CD8-positive, alpha-beta T cell (primary cell): ENCODE measurements at regions of chr2 and their contacts with region 1.

Region 1: DNA sequence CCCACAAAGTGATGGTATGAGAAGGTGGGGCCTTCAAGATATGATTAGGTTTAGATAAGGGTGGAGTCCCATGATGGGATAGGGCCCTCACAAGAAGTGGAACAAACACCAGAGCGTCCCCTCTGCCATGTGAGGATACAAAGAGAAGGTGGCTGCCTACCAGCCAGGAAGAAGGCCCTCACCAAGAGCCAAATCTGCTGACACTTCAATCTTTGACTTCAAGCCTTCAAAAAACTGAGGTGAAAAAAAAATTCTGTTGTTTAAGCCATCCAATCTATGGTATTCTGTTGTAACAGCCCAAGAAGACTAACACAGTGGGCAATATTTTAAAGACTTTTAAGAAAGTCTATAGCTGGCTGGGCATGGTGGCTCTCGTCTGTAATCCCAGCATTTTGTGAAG is 522.1 kb downstream of the NRXN1 start:
- DNase-seq: no peak
- ATAC-seq: no peak
- H3K4me3 ChIP-seq: no peak overlapping the region
- H3K4me3 Mint-ChIP-seq: no peak overlapping the region
- H3K27ac ChIP-seq: no peak overlapping the region
- H3K27ac Mint-ChIP-seq: no peak overlapping the region
- H3K4me1 ChIP-seq: no peaks in the 10 kb centered on the region
- H3K4me1 Mint-ChIP-seq: no peaks in the 10 kb centered on the region
- H3K27me3 ChIP-seq: no peaks in the 10 kb centered on the region
- H3K27me3 Mint-ChIP-seq: no peaks in the 10 kb centered on the region
- CTCF ChIP-seq: no peak

Region 2: DNA sequence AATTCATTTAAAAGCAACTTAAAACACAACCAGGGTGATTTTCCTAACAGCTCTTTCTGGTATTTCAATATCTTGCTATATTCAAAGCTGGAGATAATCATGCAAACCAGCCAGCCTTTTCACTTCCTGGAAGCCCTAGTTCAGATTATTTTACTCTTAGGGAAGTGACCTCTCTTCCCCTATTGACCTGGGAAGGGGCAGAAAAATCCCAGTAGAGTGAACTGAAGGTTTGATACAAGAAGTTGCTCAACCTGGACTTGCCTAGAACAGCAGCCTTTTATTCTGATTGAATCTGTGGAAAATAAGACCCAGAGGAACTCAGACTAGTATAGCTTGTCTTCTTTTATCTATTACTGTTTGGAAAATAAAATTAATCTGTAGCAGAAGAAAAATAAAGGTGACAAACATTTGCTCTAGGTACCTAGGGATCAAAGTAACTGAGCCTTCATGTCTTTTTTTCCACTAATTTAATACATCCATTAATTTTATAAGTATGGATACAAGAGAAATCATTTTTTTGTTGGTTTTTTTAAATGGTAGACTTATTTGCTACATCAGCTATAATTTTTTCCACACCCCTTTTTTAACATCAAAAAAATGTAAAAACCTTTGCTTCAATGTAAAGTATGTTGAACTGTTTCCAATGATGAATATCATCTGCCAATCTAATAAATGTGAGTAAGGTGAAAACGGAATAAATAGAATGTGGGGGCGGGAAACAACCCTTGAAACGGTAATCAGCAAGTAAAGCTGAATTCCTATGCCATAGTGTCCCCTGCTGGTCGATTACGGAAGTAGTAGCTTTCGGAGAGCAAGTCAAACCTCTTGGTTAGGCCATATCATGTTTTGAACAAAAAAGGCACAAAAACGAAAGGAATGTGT is 107.8 kb before region 1 on chr2:
- CTCF ChIA-PET with region 1: no interaction called
- POLR2A ChIA-PET with region 1: no interaction called
- intact Hi-C with region 1: no loop called
- DNase-seq: peak in 1 of 9 experiments; percentile 1
- ATAC-seq: no peak
- H3K4me3 ChIP-seq: no peak overlapping the region
- H3K4me3 Mint-ChIP-seq: no peak overlapping the region
- H3K27ac ChIP-seq: no peak overlapping the region
- H3K27ac Mint-ChIP-seq: no peak overlapping the region
- H3K4me1 ChIP-seq: no peaks in the 10 kb centered on the region
- H3K4me1 Mint-ChIP-seq: no peaks in the 10 kb centered on the region
- H3K27me3 ChIP-seq: no peaks in the 10 kb centered on the region
- H3K27me3 Mint-ChIP-seq: no peaks in the 10 kb centered on the region
- CTCF ChIP-seq: no peak

Region 3: GRCh38 chr2:51795248-51795888 is 1285.5 kb after region 1 on chr2:
- CTCF ChIA-PET with region 1: no interaction called
- POLR2A ChIA-PET with region 1: no interaction called
- intact Hi-C with region 1: loop called in 1 of 2 experiments (anchors 5 kb)
- DNase-seq: no peak
- ATAC-seq: no peak
- H3K4me3 ChIP-seq: no peak overlapping the region
- H3K4me3 Mint-ChIP-seq: no peak overlapping the region
- H3K27ac ChIP-seq: no peak overlapping the region
- H3K27ac Mint-ChIP-seq: no peak overlapping the region
- H3K4me1 ChIP-seq: no peaks in the 10 kb centered on the region
- H3K4me1 Mint-ChIP-seq: no peaks in the 10 kb centered on the region
- H3K27me3 ChIP-seq: no peaks in the 10 kb centered on the region
- H3K27me3 Mint-ChIP-seq: no peaks in the 10 kb centered on the region
- CTCF ChIP-seq: no peak

Region 4: DNA sequence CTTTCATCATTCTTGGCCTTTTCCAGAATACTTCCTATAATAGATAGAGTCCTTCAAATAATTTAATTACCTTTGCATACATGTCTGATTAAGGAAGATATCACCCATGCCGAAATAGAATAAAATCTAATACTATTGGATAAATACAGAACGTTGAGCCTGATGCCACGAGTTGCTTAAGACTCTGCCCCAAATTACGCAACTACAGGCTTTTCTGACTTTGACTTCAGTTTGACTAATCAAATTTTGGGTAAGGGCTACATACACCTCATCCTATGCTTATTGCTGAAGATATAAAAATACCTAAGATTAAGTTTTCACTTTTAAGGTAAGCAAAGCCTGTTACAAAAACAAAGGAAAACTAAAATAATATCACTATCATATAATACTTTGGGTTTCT is 1587.2 kb after region 1 on chr2:
- CTCF ChIA-PET with region 1: no interaction called
- POLR2A ChIA-PET with region 1: no interaction called
- intact Hi-C with region 1: no loop called
- DNase-seq: no peak
- ATAC-seq: no peak
- H3K4me3 ChIP-seq: no peak overlapping the region
- H3K4me3 Mint-ChIP-seq: no peak overlapping the region
- H3K27ac ChIP-seq: no peak overlapping the region
- H3K27ac Mint-ChIP-seq: no peak overlapping the region
- H3K4me1 ChIP-seq: no peaks in the 10 kb centered on the region
- H3K4me1 Mint-ChIP-seq: no peaks in the 10 kb centered on the region
- H3K27me3 ChIP-seq: no peaks in the 10 kb centered on the region
- H3K27me3 Mint-ChIP-seq: no peaks in the 10 kb centered on the region
- CTCF ChIP-seq: no peak